ENCODE measurements at regions of chr7 and their contacts with region 1.

Region 1: GRCh38 chr7:11810043-11810625 is 21.9 kb downstream of the THSD7A start:
- DNase-seq: no peak
- H3K4me3 ChIP-seq: no peak overlapping the region
- H3K27ac ChIP-seq: no peak overlapping the region
- H3K4me1 ChIP-seq: no peaks in the 10 kb centered on the region
- H3K27me3 ChIP-seq: no peaks in the 10 kb centered on the region
- CTCF ChIP-seq: no peak
- POLR2A ChIP-seq: no peak

Region 2: DNA sequence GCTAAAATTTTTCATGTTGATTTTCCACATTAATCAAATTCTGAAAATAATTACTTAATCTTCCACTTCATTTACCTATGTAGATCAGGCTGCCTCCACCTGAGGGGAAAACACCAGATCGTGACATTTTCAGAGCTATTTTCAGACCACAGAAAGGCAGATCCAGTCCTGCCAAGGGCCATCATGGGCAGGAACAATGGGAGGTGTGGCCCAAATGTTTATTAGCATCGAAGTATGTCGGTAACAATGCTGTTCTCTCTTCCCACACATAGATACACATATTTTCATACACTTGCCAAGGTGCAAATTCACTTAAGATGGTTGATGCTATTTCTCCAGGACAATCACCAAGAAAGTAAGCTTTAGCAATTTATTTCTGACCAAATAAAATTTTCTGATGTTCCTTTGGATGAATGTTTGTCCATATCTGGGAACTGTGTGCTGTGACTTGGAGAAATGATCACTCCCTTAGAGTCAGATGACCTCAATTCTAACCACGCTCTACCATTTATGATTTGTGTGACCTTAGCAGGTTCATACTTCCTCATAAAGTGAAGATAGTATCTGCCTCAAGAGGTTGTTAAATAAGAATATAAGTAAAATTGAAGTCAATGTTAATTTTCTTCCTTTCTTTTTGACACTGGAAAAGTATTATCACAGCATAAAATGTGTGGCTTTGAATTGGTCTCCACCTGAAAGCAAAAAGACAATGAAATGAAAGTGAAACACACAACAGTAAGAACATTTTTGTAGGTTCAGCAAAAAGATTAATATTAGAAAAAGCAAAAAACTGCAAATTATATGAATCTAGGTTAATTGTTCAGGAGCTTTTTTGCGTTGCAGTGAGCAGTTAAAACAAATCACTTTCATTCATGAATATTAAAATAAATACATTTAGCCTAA is 1146.9 kb before region 1 on chr7:
- intact Hi-C with region 1: loop called (anchors 5 kb)
- DNase-seq: no peak
- H3K4me3 ChIP-seq: no peak overlapping the region
- H3K27ac ChIP-seq: no peak overlapping the region
- H3K4me1 ChIP-seq: no peaks in the 10 kb centered on the region
- H3K27me3 ChIP-seq: no peaks in the 10 kb centered on the region
- CTCF ChIP-seq: no peak
- POLR2A ChIP-seq: no peak

Region 3: GRCh38 chr7:11613292-11613930 is 196.7 kb before region 1 on chr7:
- intact Hi-C with region 1: no loop called
- DNase-seq: no peak
- H3K4me3 ChIP-seq: no peak overlapping the region
- H3K27ac ChIP-seq: no peak overlapping the region
- H3K4me1 ChIP-seq: no peaks in the 10 kb centered on the region
- H3K27me3 ChIP-seq: no peaks in the 10 kb centered on the region
- CTCF ChIP-seq: no peak
- POLR2A ChIP-seq: no peak

Region 4: DNA sequence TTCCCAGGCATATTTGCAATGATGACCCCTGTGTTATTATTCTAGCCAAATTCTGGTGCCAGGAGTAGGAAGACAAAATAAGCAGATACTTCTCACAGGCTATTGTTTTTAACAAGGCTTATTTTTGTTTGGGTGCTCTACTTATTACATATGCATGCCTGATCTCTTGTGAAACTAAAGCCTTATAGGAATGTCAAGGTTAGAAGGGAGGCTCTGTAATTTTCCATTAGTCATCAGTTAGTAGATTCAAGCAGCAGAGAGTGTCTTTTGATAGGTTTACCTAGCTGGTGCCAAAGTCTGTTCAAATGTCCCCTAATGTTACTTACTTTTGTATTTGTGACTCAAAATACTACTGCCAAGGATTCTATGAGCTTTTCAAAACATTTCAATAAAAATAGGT is 389.2 kb after region 1 on chr7:
- intact Hi-C with region 1: no loop called
- DNase-seq: no peak
- H3K4me3 ChIP-seq: no peak overlapping the region
- H3K27ac ChIP-seq: no peak overlapping the region
- H3K4me1 ChIP-seq: no peaks in the 10 kb centered on the region
- H3K27me3 ChIP-seq: no peaks in the 10 kb centered on the region
- CTCF ChIP-seq: no peak
- POLR2A ChIP-seq: no peak